ENCODE measurements at regions of chr11 and their contacts with region 1.

Region 1: GRCh38 chr11:72471005-72471898 is 36.9 kb upstream of the CLPB start:
- DNase-seq: peak; percentile 14 to 81 (median 44)
- ATAC-seq: peak; percentile 88
- H3K4me3 ChIP-seq: no peak overlapping the region
- H3K4me3 Mint-ChIP-seq: no peak overlapping the region
- H3K27ac ChIP-seq: no peak overlapping the region
- H3K27ac Mint-ChIP-seq: no peak overlapping the region
- H3K4me1 ChIP-seq: peaks cover 8% of the 10 kb centered on the region
- H3K4me1 Mint-ChIP-seq: peaks cover 4% of the 10 kb centered on the region
- H3K27me3 ChIP-seq: peaks cover 4 to 14% of the 10 kb centered on the region in 2 experiments
- H3K27me3 Mint-ChIP-seq: peaks cover 56% of the 10 kb centered on the region
- CTCF ChIP-seq: peak; percentile 86

Region 2: DNA sequence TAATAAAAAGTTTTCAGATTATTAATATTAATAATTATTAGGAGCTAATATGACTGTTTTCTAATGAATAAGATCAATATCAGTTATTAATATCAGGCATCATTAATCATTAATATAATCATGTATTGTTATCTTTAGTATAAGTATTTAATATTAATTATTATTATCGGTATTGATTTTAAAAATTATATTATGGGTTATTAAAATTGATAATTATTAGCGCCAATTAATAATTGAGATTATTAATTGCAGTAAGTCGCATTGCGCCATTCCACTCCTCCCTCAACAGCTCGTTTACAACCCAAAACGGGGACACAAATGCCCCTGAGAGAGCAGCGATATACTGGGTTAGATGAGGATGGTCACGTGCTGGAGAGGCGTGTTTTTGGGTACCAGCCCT is 563.0 kb before region 1 on chr11:
- CTCF ChIA-PET with region 1: no interaction called
- POLR2A ChIA-PET with region 1: no interaction called
- intact Hi-C with region 1: no loop called
- DNase-seq: no peak
- ATAC-seq: no peak
- H3K4me3 ChIP-seq: no peak overlapping the region
- H3K4me3 Mint-ChIP-seq: no peak overlapping the region
- H3K27ac ChIP-seq: no peak overlapping the region
- H3K27ac Mint-ChIP-seq: no peak overlapping the region
- H3K4me1 ChIP-seq: no peaks in the 10 kb centered on the region
- H3K4me1 Mint-ChIP-seq: no peaks in the 10 kb centered on the region
- H3K27me3 ChIP-seq: no peaks in the 10 kb centered on the region
- H3K27me3 Mint-ChIP-seq: no peaks in the 10 kb centered on the region
- CTCF ChIP-seq: no peak

Region 3: DNA sequence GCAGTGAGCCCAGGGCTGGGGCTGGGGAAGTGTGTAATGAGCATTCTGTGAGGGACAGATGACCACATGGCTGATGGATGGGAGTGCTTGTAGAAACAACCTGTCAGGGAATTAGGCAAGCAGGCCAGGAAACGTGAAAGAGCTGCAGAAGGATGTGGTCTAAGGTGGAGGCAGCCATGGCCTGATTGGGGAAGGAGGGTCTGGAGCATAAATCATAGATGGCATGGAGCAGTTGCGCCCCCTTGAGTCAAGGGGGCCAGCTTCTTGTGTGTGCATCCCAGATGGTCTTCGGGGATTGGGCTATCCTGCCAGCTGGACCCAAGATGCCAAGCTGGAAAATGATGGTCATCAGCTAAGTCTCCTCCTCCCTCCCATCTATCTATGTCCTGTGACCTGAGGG is 82.5 kb after region 1 on chr11:
- CTCF ChIA-PET with region 1: interaction called, 4 read pairs
- POLR2A ChIA-PET with region 1: no interaction called
- intact Hi-C with region 1: loop called in 1 of 2 experiments (anchors 5 kb)
- DNase-seq: peak in 4 of 14 experiments; percentile 36 to 62 (median 56)
- ATAC-seq: no peak
- H3K4me3 ChIP-seq: no peak overlapping the region
- H3K4me3 Mint-ChIP-seq: no peak overlapping the region
- H3K27ac ChIP-seq: no peak overlapping the region
- H3K27ac Mint-ChIP-seq: no peak overlapping the region
- H3K4me1 ChIP-seq: peaks cover 4% of the 10 kb centered on the region
- H3K4me1 Mint-ChIP-seq: no peaks in the 10 kb centered on the region
- H3K27me3 ChIP-seq: no peaks in the 10 kb centered on the region
- H3K27me3 Mint-ChIP-seq: peaks cover 20% of the 10 kb centered on the region
- CTCF ChIP-seq: no peak

Region 4: GRCh38 chr11:72642884-72643511 is 171.7 kb after region 1 on chr11:
- CTCF ChIA-PET with region 1: no interaction called
- POLR2A ChIA-PET with region 1: no interaction called
- intact Hi-C with region 1: loop called (anchors 1 to 2 kb)
- DNase-seq: peak; percentile 26 to 85 (median 56)
- ATAC-seq: peak; percentile 84
- H3K4me3 ChIP-seq: peak overlapping the region; percentile 49
- H3K4me3 Mint-ChIP-seq: peak overlapping the region; percentile 30
- H3K27ac ChIP-seq: no peak overlapping the region
- H3K27ac Mint-ChIP-seq: no peak overlapping the region
- H3K4me1 ChIP-seq: peaks cover 19% of the 10 kb centered on the region
- H3K4me1 Mint-ChIP-seq: peaks cover 7% of the 10 kb centered on the region
- H3K27me3 ChIP-seq: peaks cover 19 to 21% of the 10 kb centered on the region in 2 experiments
- H3K27me3 Mint-ChIP-seq: peaks cover 13% of the 10 kb centered on the region
- CTCF ChIP-seq: peak; percentile 94

Region 5: DNA sequence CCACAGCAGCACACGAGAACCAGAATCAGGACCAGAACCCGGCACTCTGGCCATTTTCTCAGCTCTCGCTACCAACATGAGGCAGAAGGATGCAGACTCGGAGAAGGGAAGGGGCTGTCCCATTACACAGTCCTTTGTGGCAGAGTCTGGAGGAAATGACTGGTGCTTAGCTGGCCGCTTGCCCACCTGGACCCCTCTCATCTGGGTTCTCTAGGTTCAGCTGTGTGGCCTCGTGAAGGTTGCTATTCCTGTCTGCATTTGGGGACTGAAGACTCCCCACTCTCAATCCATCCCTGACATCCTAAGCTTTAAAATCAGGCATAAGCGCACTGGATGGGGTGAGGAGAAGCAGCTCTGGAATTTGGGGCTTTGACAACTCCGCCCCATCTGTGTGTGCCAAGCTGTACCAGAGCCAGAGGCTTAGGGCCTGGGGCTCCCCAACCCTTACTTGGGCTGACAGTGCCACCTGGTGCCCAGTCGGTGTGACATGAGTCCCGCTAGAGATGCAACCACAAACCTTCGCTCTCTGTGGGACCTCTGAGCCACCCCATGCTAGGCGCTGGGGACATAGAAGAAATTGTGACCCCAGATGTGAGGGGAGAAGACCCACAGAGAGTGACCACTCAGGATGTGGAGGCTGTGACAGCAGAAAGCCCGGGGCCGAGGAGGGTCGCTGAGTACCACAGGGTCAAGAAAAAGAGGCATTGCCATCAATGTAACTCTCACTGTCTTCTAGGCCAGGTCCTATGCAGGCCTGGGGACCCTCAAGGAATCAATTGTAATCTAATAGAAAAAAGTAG is 706.7 kb after region 1 on chr11:
- CTCF ChIA-PET with region 1: no interaction called
- POLR2A ChIA-PET with region 1: no interaction called
- intact Hi-C with region 1: loop called in 1 of 2 experiments (anchors 5 kb)
- DNase-seq: peak; percentile 71 to 89 (median 75)
- ATAC-seq: peak; percentile 100
- H3K4me3 ChIP-seq: no peak overlapping the region
- H3K4me3 Mint-ChIP-seq: no peak overlapping the region
- H3K27ac ChIP-seq: no peak overlapping the region
- H3K27ac Mint-ChIP-seq: no peak overlapping the region
- H3K4me1 ChIP-seq: peaks cover 7% of the 10 kb centered on the region
- H3K4me1 Mint-ChIP-seq: no peaks in the 10 kb centered on the region
- H3K27me3 ChIP-seq: no peaks in the 10 kb centered on the region
- H3K27me3 Mint-ChIP-seq: no peaks in the 10 kb centered on the region
- CTCF ChIP-seq: peak; percentile 78